Right ventricle myocardium inferior (tissue), 1 donor: ENCODE measurements at regions of chr1 and their contacts with region 1.

Region 1: DNA sequence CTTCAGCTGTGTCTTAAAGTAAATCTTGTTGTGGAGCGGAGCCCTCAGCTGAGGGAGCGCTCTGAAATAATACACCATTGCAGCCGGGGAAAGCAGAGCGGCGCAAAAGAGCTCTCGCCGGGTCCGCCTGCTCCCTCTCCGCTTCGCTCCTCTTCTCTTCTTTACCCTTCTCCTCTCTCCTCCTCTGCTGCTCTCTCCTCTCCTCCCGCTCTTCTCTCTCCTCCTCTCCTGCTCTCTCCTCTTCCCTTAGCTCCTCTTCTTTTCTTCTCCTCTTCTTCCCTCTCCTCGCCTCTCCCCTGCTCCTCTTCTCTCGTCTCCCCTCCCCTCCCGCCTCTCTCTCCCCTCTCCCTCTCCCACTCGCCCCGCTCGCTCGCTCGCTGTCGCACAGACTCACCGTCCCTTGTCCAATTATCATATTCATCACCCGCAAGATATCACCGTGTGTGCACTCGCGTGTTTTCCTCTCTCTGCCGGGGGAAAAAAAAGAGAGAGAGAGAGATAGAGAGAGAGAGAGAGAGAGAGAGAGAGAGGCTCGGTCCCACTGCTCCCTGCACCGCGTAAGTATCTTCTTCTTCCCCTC is at the start of gene PROX1:
- DNase-seq: no peak
- ATAC-seq: peak; percentile 87
- total RNA-seq, gene PROX1: 82.9 TPM

Region 2: DNA sequence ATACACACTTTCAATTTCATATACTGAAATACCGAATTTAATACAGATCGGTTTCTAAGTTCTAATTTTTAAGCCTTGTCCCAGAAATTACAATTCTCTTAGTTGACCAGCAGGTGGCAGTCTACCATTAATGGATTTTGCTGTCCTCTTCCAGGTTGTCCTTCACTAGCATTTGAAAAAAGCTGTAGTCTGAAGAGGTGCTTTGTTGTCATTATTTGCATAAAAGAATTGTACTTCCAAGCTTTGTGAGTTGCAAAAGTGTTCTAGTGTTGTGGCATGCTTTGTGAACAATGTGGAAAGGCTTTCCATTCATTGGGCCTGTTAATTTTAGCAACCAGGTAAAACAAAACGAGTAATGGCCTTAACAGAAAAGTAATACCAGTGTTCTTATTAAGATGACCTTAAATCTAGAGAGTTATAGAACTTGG is 743.3 kb before region 1 on chr1:
- intact Hi-C with region 1: loop called (anchors 10 kb)
- DNase-seq: no peak
- ATAC-seq: no peak

Region 3: GRCh38 chr1:213564215-213564659 is 423.8 kb before region 1 on chr1:
- intact Hi-C with region 1: loop called (anchors 10 kb)
- DNase-seq: no peak
- ATAC-seq: no peak

Region 4: DNA sequence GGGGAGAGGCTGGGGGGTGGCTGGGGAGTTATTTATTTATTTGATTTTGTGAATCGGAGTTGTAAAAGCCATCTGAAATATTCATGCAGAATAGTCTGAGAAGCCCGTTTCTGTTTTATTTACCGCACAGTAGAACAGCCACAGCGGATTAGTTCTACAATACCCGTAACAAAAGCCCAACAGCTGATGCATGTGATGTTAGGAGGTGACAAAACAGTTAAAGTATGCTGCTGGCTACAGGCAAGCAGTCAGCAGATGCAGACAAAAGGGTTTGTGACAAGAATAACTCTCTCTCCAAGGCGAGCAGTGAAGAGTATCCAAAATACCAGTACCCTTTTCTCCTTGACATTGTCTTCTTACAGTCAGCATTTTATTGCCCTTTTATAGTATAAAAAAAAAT is 41.8 kb after region 1 on chr1:
- intact Hi-C with region 1: loop called (anchors 2 kb)
- DNase-seq: no peak
- ATAC-seq: peak; percentile 79

Region 5: DNA sequence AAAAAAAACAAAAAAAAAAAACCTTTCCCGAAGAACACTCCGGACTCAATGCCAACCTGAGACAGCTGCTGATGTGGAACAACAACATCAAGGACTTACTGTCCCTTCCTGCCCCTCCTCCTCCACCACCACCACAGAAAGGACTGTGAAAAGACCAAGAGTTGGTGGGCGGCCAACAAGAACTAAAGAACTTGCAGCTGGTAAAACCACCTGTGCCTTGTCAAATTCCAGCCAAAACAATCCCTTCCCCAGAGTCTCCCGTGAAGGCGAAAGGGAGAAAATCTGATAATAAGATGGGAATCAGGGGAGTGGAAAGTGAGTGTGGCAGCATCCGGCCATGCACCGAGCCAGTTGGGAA is 88.7 kb after region 1 on chr1:
- intact Hi-C with region 1: no loop called
- DNase-seq: no peak
- ATAC-seq: no peak

Region 6: GRCh38 chr1:214107322-214108096 is 119.5 kb after region 1 on chr1:
- intact Hi-C with region 1: loop called (anchors 2 kb)
- DNase-seq: peak; percentile 70
- ATAC-seq: peak; percentile 93

Region 7: GRCh38 chr1:214123061-214123784 is 135.2 kb after region 1 on chr1:
- intact Hi-C with region 1: loop called (anchors 2 kb)
- DNase-seq: no peak
- ATAC-seq: peak; percentile 72